Activated B cell treated with CpG ODN at 0.5 μM for 24 hours (primary cell): ENCODE measurements at regions of chr12 and their contacts with region 1.

Region 1: DNA sequence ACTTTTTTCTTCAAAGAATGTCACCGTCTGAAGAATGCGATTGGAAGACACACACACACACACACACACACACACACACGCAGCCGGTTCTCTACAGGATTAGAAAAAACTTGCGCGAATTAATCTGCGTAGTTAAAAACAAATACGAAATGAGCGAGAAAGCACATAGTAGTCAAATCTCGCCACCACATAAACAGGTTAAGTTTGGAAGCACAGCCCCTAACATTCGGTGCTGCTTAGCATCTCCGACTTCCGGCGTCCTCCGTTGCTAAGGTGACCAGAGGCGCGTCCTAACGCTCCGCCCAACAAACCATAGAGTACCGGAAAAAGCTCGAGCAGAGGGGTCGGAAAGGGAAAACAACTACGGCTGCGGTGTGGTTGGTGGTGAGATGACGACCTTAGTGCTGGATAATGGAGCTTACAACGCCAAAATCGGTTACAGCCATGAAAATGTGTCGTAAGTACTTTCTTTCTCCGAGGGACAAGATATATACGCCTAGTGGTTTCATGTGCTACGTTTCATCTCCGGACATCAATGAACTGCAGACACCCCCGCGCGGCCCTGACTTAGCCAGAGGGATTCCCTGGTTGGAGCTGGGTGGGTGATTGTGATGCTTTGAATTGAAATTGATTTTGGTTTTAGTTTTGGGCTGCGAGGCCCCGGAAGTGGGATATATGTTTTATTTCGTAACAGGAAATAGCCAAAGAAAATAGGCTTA is at the start of gene ACTR6:
- DNase-seq: peak; percentile 93
- ATAC-seq: peak; percentile 85
- H3K4me3 Mint-ChIP-seq: peak within 1 kb of the TSS; percentile 98
- H3K27ac Mint-ChIP-seq: peak within 1 kb of the TSS; percentile 95
- H3K4me1 Mint-ChIP-seq: peaks cover 29% of the 10 kb centered on the region
- H3K27me3 Mint-ChIP-seq: no peaks in the 10 kb centered on the region
- CTCF ChIP-seq: no peak
- total RNA-seq, gene ACTR6: 23.5 and 27.5 TPM in 2 replicates

Region 2: DNA sequence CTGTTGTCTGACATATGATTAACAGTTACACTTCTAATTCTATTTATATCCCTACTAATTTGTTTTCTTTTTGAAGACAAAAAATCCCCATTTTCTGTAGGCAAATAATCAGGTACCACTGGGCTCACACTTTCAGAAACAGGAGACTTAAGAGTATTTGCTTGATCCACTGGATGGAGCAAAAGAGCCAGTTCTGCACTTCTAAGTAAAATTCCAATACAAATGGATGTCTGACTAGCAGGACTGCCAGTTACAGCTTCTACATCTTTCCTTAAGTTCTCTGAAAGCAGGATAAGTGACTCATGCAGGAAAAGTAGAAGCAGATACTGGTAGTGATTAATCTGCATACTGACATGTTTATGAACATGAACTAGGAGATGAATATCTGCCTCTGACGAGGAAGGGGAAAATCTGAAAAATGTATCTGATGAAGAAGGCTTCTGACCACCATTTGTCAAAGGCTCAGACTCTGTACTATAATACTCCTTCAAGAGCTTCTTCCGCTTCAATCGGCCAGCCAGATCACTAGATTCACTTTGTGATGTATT is 142.1 kb before region 1 on chr12:
- CTCF ChIA-PET with region 1: no interaction called
- POLR2A ChIA-PET with region 1: no interaction called
- intact Hi-C with region 1: loop called (anchors 10 kb)
- DNase-seq: no peak
- ATAC-seq: no peak
- H3K4me3 Mint-ChIP-seq: no peak overlapping the region
- H3K27ac Mint-ChIP-seq: no peak overlapping the region
- H3K4me1 Mint-ChIP-seq: no peaks in the 10 kb centered on the region
- H3K27me3 Mint-ChIP-seq: no peaks in the 10 kb centered on the region
- CTCF ChIP-seq: no peak

Region 3: DNA sequence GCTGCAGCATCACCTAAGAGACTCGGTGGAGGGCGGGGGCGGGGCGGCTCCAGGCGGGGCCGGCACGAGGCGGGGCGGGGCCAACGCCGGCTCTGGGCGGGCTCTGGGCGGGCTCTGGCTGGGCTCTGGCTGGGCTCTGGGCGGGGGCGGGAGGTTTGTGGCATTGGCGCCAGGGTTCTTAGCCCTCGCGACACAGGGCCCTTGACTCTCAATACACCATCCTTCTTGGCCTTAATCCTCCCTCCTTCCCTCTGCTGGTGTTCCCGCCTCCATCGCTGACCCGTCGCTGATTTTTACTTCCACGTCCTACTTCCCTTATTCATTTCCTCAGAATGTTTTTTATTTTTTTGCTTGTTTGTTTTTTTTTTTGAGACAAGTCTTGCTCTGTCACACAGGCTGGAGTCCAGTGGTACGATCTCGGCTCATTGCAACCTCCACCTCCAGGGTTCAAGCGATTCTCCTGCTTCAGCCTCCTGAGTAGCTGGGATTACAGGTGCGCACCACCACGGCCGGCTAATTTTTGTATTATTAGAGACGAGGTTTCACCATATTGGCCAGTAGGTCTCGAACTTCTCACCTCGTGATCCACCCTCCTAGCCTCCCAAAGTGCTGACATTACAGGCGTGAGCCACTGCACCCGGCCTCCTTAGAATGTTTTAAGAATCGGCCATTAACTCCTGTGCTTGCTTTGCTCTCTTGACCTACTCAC is 57.6 kb before region 1 on chr12 and contains the start of gene BLTP3B:
- CTCF ChIA-PET with region 1: no interaction called
- POLR2A ChIA-PET with region 1: interaction called, 4 read pairs
- intact Hi-C with region 1: loop called (anchors 1 kb)
- DNase-seq: peak; percentile 85
- ATAC-seq: peak; percentile 93
- H3K4me3 Mint-ChIP-seq: peak within 1 kb of the TSS; percentile 92
- H3K27ac Mint-ChIP-seq: peak within 1 kb of the TSS; percentile 93
- H3K4me1 Mint-ChIP-seq: peaks cover 41% of the 10 kb centered on the region
- H3K27me3 Mint-ChIP-seq: no peaks in the 10 kb centered on the region
- CTCF ChIP-seq: no peak
- total RNA-seq, gene BLTP3B: 22.3 and 22.5 TPM in 2 replicates

Region 4: GRCh38 chr12:100163416-100164152 is 37.0 kb before region 1 on chr12:
- CTCF ChIA-PET with region 1: no interaction called
- POLR2A ChIA-PET with region 1: interaction called, 7 read pairs
- intact Hi-C with region 1: loop called (anchors 1 kb)
- DNase-seq: peak; percentile 42
- ATAC-seq: peak; percentile 100
- H3K4me3 Mint-ChIP-seq: peak overlapping the region; percentile 74
- H3K27ac Mint-ChIP-seq: no peak overlapping the region
- H3K4me1 Mint-ChIP-seq: peaks cover 11% of the 10 kb centered on the region
- H3K27me3 Mint-ChIP-seq: no peaks in the 10 kb centered on the region
- CTCF ChIP-seq: no peak

Region 5: GRCh38 chr12:100266835-100267618 is 66.4 kb after region 1 on chr12 and contains the starts of genes DEPDC4 and SCYL2:
- CTCF ChIA-PET with region 1: no interaction called
- POLR2A ChIA-PET with region 1: interaction called, 26 read pairs
- intact Hi-C with region 1: loop called (anchors 1 kb)
- DNase-seq: peak; percentile 90
- ATAC-seq: peak; percentile 93
- H3K4me3 Mint-ChIP-seq: peak within 1 kb of the TSS; percentile 99
- H3K27ac Mint-ChIP-seq: peak within 1 kb of the TSS; percentile 95
- H3K4me1 Mint-ChIP-seq: peaks cover 34% of the 10 kb centered on the region
- H3K27me3 Mint-ChIP-seq: no peaks in the 10 kb centered on the region
- CTCF ChIP-seq: no peak
- total RNA-seq, gene DEPDC4: 0.49 and 0.81 TPM in 2 replicates
- total RNA-seq, gene SCYL2: 34.7 and 38.7 TPM in 2 replicates

Region 6: GRCh38 chr12:100573292-100574186 is 372.9 kb after region 1 on chr12 and contains the start of gene GAS2L3:
- CTCF ChIA-PET with region 1: no interaction called
- POLR2A ChIA-PET with region 1: no interaction called
- intact Hi-C with region 1: loop called (anchors 1 kb)
- DNase-seq: peak; percentile 58
- ATAC-seq: peak; percentile 90
- H3K4me3 Mint-ChIP-seq: peak within 1 kb of the TSS; percentile 89
- H3K27ac Mint-ChIP-seq: no peak within 1 kb of the TSS
- H3K4me1 Mint-ChIP-seq: peaks cover 13% of the 10 kb centered on the region
- H3K27me3 Mint-ChIP-seq: peaks cover 5% of the 10 kb centered on the region
- CTCF ChIP-seq: no peak
- total RNA-seq, gene GAS2L3: 0.07 and 0.10 TPM in 2 replicates

Region 7: DNA sequence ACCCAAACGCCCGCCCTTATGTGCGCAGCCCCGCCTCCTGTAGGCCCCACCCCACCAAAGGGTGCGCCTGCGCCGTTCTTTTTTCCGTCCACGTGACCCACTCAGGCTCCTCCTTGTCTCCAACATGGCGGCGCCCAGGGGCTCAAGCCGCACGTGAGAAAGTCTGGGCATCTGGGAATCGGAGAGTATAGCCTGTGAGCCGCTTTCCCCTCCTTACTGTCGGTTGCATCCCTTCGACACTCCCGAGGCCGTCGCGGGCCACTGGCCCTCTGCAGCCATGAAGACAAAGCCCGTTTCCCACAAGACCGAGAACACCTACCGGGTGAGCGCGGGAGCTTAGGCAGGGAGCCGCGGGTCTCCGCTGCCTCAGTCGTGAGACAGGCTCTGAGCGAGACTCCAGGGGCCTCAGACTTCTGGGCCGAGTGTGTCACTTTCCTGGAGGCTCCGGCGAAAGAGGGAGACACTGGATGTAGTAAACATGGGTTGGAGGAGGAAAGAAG is 1079.4 kb after region 1 on chr12 and contains the start of gene UTP20:
- CTCF ChIA-PET with region 1: no interaction called
- POLR2A ChIA-PET with region 1: no interaction called
- intact Hi-C with region 1: loop called (anchors 1 kb)
- DNase-seq: peak; percentile 92
- ATAC-seq: peak; percentile 100
- H3K4me3 Mint-ChIP-seq: peak within 1 kb of the TSS; percentile 96
- H3K27ac Mint-ChIP-seq: peak within 1 kb of the TSS; percentile 88
- H3K4me1 Mint-ChIP-seq: peaks cover 8% of the 10 kb centered on the region
- H3K27me3 Mint-ChIP-seq: peaks cover 18% of the 10 kb centered on the region
- CTCF ChIP-seq: no peak
- total RNA-seq, gene UTP20: 26.1 and 32.9 TPM in 2 replicates